Common myeloid progenitor, CD34-positive (primary cell): ENCODE measurements at regions of chrX and their contacts with region 1.

Region 1: DNA sequence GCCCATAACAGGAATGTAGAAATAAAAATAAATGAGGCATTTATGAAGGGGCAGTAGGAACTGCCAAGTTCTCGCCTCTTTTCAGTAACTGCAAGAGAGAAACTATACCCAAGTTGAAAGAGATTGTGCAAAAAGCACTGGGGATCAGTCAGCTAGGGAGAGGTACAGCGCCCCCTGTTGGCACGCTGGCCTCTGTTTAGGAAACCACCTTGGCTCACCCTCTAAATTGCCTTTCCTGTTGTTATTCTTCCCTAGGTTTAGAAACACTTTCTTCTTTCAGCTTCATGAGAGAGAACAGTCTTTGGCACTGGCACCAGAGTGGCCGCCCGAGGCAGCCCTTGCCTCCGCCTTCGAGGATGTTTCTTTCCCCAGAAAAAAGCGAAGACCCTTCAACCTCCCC is 348.5 kb downstream of the MID1IP1 start:
- DNase-seq: peak; percentile 42 to 76 (median 68)
- H3K4me3 ChIP-seq: no peak overlapping the region
- H3K27ac ChIP-seq: no peak overlapping the region
- H3K4me1 ChIP-seq: peaks cover 0 to 19% (median 9%) of the 10 kb centered on the region in 4 experiments
- H3K27me3 ChIP-seq: no peaks in the 10 kb centered on the region

Region 2: DNA sequence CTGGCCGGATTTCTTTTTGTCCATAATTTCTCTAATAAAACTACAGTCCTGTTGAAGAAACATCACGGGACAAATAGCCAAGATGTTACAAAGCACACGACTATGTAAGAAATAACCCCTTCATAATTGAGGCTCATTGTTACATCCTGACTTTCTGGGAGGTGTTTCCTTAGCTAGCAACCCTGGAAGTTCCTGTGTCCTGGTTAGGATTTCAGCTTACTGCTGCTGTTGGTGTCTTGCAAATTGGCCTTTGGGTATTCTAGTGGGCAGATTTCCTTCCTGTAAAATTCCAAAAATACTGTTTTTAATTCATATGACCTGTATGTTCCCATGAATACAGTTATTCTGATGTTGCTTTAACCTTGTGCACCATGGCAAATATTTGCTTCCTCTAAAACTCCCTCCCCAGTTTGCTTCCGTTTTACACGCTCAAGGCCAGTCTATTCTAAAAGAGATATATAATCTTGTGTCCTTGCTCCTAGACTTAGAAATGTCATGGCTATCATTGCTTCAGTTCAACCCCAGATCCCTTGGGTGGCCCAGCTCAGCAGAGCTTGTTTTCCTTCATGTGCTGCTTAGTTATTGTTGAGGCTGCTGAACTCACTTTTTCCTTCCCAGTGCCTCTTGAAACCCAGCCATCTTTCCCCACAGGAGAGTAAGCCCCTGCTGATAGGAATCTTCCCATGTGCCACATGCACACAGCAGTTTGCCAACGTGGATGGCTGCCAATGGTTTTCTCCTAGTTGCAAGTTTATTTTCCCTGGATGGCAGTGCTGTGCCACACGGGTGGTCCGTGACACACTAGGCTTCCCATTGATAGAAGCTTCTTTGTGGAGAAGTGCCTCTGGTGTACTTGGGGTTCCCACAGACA is 512.6 kb before region 1 on chrX:
- CTCF ChIA-PET with region 1: no interaction called
- POLR2A ChIA-PET with region 1: no interaction called
- DNase-seq: no peak
- H3K4me3 ChIP-seq: no peak overlapping the region
- H3K27ac ChIP-seq: no peak overlapping the region
- H3K4me1 ChIP-seq: peaks cover 0 to 7% (median 0%) of the 10 kb centered on the region in 4 experiments
- H3K27me3 ChIP-seq: peaks cover 0 to 3% (median 0%) of the 10 kb centered on the region in 5 experiments

Region 3: GRCh38 chrX:39133971-39134370 is 15.8 kb before region 1 on chrX:
- CTCF ChIA-PET with region 1: interaction called, 21 read pairs
- POLR2A ChIA-PET with region 1: no interaction called
- DNase-seq: peak in 2 of 3 donors; percentile 38 to 43
- H3K4me3 ChIP-seq: no peak overlapping the region
- H3K27ac ChIP-seq: no peak overlapping the region
- H3K4me1 ChIP-seq: no peaks in the 10 kb centered on the region
- H3K27me3 ChIP-seq: no peaks in the 10 kb centered on the region

Region 4: GRCh38 chrX:40298572-40299479 is 1149.1 kb after region 1 on chrX:
- CTCF ChIA-PET with region 1: no interaction called
- POLR2A ChIA-PET with region 1: no interaction called
- DNase-seq: peak in 1 of 3 donors; percentile 28
- H3K4me3 ChIP-seq: no peak overlapping the region
- H3K27ac ChIP-seq: no peak overlapping the region
- H3K4me1 ChIP-seq: peaks cover 0 to 8% (median 0%) of the 10 kb centered on the region in 4 experiments
- H3K27me3 ChIP-seq: peaks cover 0 to 10% (median 0%) of the 10 kb centered on the region in 5 experiments